ENCODE measurements at regions of chr14 and their contacts with region 1.

Region 1: DNA sequence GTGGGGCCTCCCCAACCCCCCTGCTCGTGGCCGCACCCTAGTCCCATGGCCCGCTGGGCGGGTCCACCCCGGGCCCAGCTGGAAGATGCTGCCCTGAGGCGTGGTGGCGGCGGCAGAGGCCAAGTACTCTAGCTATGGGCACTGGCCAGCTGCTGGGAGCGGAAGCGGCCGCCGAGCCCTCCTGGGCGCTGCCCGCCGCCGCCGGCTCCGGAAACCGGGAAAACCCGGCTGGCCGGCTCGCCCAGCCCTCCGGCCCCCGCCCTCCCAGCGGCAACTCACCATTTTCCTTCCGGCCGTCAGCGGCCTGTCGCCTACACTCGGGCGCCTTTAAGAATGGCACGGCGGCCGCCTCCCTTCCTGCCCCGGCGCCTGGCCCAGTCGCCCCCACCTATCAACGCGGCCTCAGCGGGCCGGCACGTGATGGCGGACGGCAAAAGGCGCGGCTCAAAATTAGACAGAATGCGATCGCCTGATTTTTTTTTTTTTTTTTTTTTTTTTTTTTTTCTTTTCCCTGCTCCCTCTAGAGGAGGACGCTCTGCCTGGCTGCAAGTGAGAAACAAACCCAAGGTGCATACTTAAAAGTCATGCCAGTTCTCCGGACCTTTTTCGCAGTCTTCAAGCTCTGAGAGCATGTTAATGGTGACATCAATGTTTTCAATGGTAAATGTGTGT is at the start of gene GMFB:
- DNase-seq: peak; percentile 76 to 96 (median 90)

Region 2: GRCh38 chr14:54440873-54441868 is 47.6 kb before region 1 on chr14 and contains the start of gene CNIH1:
- intact Hi-C with region 1: loop called (anchors 2 kb)
- DNase-seq: peak; percentile 72 to 97 (median 93)

Region 3: GRCh38 chr14:54472315-54472714 is 16.5 kb before region 1 on chr14:
- intact Hi-C with region 1: no loop called
- DNase-seq: no peak

Region 4: DNA sequence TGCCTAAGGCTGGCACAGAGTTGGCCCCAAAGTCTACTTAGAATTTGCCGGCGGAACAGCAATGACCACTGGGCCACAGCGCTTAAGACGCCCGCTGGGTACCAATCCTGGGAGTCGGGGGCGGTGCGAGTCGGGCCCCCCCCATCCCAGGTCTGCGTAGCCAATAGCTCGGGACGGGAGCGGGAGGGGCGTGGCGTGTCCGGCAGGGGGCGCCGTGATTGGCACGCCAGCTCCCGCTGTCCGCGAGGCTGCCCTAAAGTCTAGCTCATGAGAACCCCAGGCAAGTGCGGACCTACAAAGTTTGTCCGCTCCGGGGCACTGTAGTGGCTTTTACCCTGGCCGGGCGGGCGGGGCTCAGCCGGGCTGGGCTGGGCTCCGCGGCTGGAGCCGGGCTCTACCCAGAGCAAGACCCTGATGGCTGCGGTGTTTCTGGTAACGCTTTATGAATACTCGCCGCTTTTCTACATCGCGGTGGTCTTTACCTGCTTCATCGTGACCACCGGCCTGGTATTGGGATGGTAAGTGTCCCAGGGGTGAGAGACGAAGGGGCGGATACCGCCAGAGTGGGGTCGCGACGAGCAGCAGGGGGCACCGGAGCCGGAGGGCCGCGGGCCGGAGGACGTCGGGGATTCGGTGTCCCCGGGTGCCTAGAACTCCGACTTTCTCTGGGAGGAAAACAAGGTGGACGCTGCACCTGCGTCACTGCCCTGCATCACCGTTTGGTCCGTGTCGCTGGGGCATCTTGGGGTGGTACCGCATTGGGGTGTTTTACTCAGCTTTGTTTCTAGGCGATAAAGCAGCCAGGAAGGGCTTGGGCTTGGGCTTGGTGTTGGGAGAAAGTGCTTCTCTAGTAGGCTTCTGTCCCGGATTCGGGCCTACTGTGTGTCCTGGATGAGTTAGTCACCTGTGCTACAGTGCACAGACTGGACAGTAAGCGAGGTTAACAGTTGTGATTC is 21.0 kb after region 1 on chr14 and contains the start of gene CGRRF1:
- intact Hi-C with region 1: loop called (anchors 2 kb)
- DNase-seq: peak; percentile 97 to 100 (median 99)

Region 5: DNA sequence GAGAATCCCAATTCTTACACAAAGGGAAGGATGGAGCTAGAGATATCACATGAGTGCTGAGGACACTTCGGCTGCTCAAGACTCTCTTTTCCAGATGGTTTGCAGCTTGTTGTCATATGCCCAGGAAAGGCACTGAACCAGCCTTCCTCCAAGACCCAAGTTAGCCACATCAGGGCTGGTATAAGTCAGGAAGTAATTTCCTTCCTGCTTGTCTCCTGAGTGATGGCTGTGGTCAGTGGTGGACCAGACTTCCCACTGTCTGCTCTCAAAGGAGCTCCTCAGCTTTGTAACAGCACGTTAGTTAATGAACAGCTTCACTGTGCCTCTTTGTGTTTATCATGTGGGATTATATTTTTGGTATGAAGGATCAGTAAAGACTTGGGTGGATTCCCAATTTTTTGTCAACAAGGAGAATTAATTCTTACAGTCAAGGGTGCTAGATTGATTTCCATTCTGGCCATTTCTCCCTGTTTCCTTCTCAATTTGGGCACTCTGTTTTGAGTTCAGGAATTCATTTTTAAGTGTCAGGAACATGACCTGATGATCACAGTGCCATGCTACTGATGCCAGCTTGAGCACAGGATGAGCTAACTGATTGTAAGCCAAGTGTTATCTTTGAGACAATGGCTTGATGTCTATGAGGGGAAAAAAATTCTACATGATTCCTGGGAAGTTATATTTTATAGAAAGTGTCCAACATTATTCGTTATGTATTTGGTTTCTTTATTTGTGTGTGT is 268.0 kb after region 1 on chr14:
- intact Hi-C with region 1: no loop called
- DNase-seq: no peak